ENCODE measurements at regions of chrX and their contacts with region 1.

Region 1: DNA sequence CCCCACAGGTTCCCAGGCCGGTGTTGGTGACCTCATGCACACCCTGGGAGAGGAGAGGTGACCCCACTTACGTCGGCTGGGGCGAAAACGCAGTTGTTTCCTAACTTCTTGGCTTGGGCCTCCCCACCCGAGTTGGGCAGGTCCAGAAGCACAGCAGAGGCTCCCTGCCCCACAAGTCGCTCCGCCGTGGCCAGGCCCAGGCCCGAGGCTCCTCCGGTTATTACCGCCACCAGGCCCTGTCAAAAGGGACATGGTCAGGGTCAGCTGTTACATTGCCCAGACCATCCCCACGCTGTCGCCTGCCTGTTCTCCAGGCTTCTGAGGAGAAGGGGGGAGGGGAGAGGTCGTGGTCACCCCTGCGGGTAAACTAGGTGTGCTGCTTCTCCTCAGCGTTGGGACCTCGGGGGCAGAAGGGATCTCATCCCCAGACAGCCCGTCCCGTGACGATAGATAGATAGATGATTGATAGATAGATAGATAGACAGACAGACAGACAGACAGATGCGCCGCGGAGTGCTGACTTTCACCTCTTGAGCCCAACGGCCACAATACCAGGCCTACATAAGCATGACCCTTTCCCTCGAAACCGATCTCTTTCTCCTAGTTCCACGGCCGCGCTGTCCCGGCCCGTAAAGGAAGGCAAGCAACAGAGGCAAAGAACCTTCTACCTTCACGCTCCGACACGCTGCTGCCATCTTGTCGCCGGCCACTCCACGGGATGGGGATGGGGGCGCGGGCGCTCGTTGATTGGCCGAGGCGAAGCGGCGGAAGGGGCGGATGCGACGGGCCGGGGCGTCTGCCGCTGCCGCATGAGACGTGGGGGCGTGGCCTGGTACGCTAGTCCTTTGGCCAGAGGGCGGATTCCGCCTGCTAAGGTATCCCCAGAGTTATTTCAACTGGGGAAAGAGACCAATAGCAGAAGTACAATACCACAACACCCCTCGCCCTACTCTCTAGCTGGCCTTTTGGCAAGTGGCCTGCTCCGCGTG is at the start of gene HSD17B10:
- DNase-seq: peak; percentile 82
- H3K4me3 Mint-ChIP-seq: peak within 1 kb of the TSS; percentile 97
- H3K27ac Mint-ChIP-seq: peak within 1 kb of the TSS; percentile 89
- H3K4me1 Mint-ChIP-seq: peaks cover 28% of the 10 kb centered on the region
- H3K27me3 Mint-ChIP-seq: no peaks in the 10 kb centered on the region
- total RNA-seq, gene HSD17B10: 135 and 139 TPM in 2 replicates

Region 2: DNA sequence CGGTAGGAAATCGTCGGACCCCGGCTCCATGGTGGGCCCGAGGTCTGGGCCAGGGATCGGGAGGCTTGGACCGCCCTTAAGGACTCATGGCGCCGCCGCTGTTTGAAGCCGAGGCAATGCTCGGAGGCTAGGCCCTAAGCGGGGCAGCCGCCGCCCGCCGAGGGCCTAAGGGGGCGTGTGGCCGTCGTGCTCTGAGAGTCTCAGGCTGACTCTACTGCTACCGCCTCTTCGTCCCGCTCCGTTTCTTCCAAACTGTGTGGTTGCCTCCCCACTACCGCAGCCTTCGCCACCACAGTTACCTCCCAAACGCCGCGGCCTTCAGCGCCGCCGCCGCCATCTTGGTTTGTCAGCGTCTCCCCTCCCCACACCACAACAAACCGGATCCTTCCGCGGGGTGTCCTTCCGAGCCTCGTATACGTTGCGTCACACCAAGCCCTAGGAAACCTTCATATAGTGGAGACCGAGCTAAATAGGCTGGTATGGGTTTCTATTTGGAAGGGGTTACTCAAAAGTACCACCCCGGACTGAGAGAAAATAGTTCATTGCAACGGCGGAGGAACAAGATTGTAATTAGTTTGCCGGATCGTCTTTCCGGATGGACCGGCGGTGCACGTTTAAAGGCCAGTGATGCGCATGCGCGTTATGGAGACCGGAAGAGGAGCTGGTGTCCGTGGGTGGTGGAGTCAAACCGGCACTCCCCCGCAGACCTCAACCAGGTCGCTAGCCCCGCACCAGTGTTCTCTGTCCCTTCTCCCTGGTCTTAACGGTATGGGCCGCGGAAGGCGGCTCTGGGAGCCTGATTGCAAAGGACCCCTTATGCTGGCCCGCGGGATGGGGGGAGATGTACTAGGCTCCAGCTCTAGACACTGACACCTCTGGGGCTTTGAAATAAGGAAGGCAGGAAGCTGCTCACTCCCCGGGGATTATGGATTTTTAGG is 208.8 kb before region 1 on chrX and contains the start of gene KDM5C:
- intact Hi-C with region 1: loop called (anchors 10 kb)
- DNase-seq: peak; percentile 85
- H3K4me3 Mint-ChIP-seq: peak within 1 kb of the TSS; percentile 93
- H3K27ac Mint-ChIP-seq: peak within 1 kb of the TSS; percentile 98
- H3K4me1 Mint-ChIP-seq: peaks cover 39% of the 10 kb centered on the region
- H3K27me3 Mint-ChIP-seq: no peaks in the 10 kb centered on the region
- total RNA-seq, gene KDM5C: 98.3 and 111 TPM in 2 replicates

Region 3: DNA sequence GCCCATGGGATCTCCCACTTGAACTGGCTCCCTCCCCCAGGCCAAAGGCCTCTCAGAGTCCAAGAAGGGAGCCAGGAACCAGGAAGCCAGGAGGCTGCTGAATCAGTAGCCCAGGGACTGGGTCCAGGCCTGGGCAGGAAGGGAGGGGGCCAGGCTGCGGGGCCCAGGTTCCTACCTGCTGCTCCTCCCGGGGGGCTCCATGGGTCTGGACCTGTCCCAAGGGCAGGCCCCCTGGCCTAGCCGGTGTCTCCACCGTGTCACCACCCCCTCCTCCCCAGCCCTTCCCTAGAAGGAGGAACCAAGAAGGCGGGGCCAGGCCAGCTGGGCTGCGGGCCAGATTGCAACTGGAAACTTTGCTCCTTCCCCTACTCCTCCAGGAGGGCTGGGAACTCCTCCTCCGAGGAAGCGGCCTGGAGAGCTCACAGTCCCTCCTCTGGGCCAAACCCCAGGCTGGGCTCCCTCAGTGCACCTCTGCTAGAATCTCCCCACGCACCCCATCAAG is 152.6 kb before region 1 on chrX and contains the start of gene IQSEC2:
- intact Hi-C with region 1: no loop called
- DNase-seq: no peak
- H3K4me3 Mint-ChIP-seq: no peak within 1 kb of the TSS
- H3K27ac Mint-ChIP-seq: no peak within 1 kb of the TSS
- H3K4me1 Mint-ChIP-seq: peaks cover 3% of the 10 kb centered on the region
- H3K27me3 Mint-ChIP-seq: no peaks in the 10 kb centered on the region
- total RNA-seq, gene IQSEC2: 0.14 and 0.21 TPM in 2 replicates

Region 4: GRCh38 chrX:53422086-53422860 is 11.7 kb before region 1 on chrX and contains the start of gene SMC1A:
- intact Hi-C with region 1: loop called (anchors 1 kb)
- DNase-seq: peak; percentile 94
- H3K4me3 Mint-ChIP-seq: peak within 1 kb of the TSS; percentile 95
- H3K27ac Mint-ChIP-seq: peak within 1 kb of the TSS; percentile 79
- H3K4me1 Mint-ChIP-seq: peaks cover 25% of the 10 kb centered on the region
- H3K27me3 Mint-ChIP-seq: no peaks in the 10 kb centered on the region
- total RNA-seq, gene SMC1A: 134 and 136 TPM in 2 replicates

Region 5: GRCh38 chrX:53456254-53456653 is 22.3 kb after region 1 on chrX:
- intact Hi-C with region 1: no loop called
- DNase-seq: no peak
- H3K4me3 Mint-ChIP-seq: no peak overlapping the region
- H3K27ac Mint-ChIP-seq: no peak overlapping the region
- H3K4me1 Mint-ChIP-seq: no peaks in the 10 kb centered on the region
- H3K27me3 Mint-ChIP-seq: peaks cover 9% of the 10 kb centered on the region